Activated naive CD4-positive, alpha-beta T cell treated with anti-CD3 and anti-CD28 coated beads, Interleukin-2, amount 10 ng/mL, durations not matched to agents 7 days and 5 days (primary cell): ENCODE measurements at regions of chr6 and their contacts with region 1.

Region 1: DNA sequence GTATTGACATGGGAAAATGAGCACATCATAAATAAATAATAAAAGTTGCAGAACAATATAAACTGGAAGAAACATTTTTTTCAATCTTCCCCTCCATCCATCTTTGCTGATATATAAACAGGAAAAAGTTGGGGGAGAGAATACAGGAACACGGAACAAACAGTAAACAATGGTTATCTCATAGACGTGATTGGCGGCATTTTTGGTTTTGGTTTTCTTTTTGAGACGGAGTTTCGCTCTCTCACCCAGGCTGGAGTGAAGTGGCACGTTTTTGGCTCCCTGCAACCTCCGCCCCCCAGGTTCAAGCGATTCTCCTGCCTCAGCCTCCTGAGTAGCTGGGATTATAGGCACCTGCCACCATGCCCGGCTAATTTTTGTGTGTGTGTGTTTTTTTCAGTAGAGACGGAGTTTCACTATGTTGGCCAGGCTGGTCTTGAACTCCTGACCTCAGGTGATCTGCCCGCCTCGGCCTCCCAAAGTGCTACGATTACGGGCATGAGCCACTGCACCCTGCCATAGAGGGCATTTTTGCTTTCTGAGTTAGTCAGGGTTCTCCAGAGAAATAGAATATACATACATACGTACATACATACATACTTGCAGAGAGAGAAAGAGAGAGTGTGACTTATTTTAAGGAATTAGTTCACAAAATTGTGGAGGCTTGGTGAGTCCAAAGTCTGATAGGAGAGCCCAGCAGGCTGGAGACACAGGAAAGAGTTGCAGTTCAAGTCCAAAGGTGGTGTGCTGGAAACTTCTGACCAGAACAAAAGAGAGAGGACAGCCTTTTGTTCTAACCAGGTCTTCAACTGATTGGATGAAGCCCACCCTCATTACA is 22.6 kb downstream of the GNL1 start:
- DNase-seq: no peak
- H3K4me3 Mint-ChIP-seq: peak overlapping the region; percentile 54
- H3K27ac Mint-ChIP-seq: peak overlapping the region; percentile 90
- H3K4me1 Mint-ChIP-seq: peaks cover 44% of the 10 kb centered on the region
- H3K27me3 Mint-ChIP-seq: peaks cover 7% of the 10 kb centered on the region

Region 2: DNA sequence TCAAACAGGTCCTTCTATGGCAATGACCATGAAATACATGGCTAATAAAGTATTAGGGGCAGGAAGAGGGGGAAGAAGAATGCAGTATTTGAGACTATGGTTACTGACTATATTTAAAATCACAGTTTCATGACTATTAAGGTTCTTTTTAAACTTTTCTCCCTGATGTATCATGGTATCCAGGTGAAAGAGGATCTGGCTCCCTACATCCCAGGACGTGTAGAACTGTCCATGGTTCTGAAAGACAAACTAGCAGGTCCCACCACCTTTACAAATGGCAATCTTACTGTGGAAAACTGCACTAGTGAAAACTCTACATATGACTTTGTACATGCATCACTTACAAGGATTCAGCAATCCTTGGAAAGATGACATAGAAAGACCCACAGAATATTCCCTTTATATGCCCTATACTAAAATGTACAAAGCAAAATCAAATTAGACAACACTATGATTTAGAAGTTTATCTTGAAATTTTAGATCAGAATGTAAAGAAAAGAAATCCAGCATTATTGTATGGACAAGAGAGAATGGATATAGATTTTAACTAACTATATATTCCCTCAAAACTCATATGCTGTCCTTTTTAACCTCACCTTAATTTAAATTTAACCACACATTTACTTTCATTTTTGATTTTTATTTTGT is 155.3 kb before region 1 on chr6:
- CTCF ChIA-PET with region 1: no interaction called
- DNase-seq: no peak
- H3K4me3 Mint-ChIP-seq: no peak overlapping the region
- H3K27ac Mint-ChIP-seq: no peak overlapping the region
- H3K4me1 Mint-ChIP-seq: no peaks in the 10 kb centered on the region
- H3K27me3 Mint-ChIP-seq: peaks cover 42% of the 10 kb centered on the region

Region 3: DNA sequence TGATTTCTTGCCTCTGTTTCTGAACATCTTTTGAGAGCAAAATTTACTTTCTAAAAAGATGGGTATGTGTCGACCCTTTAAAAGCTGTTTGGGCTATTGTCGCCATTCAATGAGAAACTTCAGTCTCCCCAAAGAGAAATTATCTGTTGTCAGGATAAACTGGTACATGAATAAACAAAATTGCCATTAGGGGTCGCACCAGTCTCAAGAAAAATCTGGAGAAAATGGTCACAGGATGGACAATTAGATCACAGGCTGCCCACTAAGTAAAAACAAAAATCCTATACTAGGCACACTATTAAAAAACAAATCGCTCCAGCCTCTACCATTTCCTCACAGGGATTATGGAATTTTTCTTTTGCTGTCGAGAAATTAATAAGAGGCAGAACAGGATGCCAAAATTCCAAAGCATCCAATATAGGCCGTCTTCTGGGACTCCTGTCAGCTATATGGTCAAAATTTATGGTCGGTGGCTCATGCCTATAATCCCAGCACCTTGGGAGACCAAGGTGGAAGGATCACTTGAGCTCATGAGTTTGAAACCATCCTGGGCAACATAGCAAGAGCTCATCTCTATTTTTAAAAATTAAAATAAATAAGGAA is 49.9 kb before region 1 on chr6:
- CTCF ChIA-PET with region 1: interaction called, 251 read pairs
- DNase-seq: no peak
- H3K4me3 Mint-ChIP-seq: no peak overlapping the region
- H3K27ac Mint-ChIP-seq: no peak overlapping the region
- H3K4me1 Mint-ChIP-seq: peaks cover 51% of the 10 kb centered on the region
- H3K27me3 Mint-ChIP-seq: peaks cover 60% of the 10 kb centered on the region

Region 4: GRCh38 chr6:30489081-30490025 is 44.3 kb before region 1 on chr6 and contains the start of gene HLA-E:
- CTCF ChIA-PET with region 1: interaction called, 251 read pairs
- DNase-seq: peak; percentile 94
- H3K4me3 Mint-ChIP-seq: peak within 1 kb of the TSS; percentile 99
- H3K27ac Mint-ChIP-seq: peak within 1 kb of the TSS; percentile 100
- H3K4me1 Mint-ChIP-seq: peaks cover 49% of the 10 kb centered on the region
- H3K27me3 Mint-ChIP-seq: peaks cover 19% of the 10 kb centered on the region

Region 5: GRCh38 chr6:30500421-30501355 is 33.0 kb before region 1 on chr6:
- CTCF ChIA-PET with region 1: interaction called, 31 read pairs
- DNase-seq: no peak
- H3K4me3 Mint-ChIP-seq: peak overlapping the region; percentile 64
- H3K27ac Mint-ChIP-seq: peak overlapping the region; percentile 72
- H3K4me1 Mint-ChIP-seq: peaks cover 40% of the 10 kb centered on the region
- H3K27me3 Mint-ChIP-seq: no peaks in the 10 kb centered on the region

Region 6: DNA sequence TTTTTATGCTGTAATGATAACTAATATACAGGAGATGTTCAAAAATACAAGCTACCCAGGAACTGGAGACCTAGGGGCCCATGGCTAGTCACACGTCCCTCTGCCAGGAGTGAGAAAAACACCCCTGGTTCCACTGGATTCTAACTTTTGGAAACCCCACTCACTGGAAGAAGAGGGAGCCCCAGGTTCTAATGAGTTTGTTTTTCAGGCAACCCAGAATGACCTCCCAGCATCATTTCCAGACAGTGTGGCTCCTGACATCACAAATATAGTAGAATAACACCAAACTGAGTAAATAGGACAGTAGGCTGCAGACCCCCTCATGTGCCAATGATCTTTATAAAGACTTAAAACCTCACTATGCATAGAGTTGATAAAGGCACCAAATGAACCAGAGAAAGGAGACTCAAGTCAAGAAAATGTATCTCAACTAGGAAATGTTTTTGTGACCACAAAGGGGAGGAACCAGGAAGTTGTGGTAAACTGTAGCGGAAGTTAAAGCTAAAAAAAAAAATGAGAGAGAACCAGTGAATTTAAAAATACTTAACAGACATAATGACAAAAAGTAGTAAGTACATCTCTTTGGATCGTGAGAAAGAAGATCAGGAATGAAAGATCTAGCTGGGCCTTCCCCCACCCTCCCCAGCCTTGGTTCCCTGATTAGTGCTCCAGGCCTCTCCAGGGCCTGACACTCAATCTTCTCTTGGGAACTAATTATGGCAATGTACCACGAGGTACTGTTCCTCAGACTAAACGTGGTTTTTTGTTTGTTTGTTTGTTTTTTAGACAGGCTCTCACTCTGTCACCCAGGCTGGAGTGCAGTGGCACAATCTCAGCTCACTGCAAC is 24.6 kb before region 1 on chr6:
- CTCF ChIA-PET with region 1: interaction called, 15 read pairs
- DNase-seq: peak; percentile 41
- H3K4me3 Mint-ChIP-seq: peak overlapping the region; percentile 49
- H3K27ac Mint-ChIP-seq: peak overlapping the region; percentile 91
- H3K4me1 Mint-ChIP-seq: peaks cover 66% of the 10 kb centered on the region
- H3K27me3 Mint-ChIP-seq: no peaks in the 10 kb centered on the region

Region 7: DNA sequence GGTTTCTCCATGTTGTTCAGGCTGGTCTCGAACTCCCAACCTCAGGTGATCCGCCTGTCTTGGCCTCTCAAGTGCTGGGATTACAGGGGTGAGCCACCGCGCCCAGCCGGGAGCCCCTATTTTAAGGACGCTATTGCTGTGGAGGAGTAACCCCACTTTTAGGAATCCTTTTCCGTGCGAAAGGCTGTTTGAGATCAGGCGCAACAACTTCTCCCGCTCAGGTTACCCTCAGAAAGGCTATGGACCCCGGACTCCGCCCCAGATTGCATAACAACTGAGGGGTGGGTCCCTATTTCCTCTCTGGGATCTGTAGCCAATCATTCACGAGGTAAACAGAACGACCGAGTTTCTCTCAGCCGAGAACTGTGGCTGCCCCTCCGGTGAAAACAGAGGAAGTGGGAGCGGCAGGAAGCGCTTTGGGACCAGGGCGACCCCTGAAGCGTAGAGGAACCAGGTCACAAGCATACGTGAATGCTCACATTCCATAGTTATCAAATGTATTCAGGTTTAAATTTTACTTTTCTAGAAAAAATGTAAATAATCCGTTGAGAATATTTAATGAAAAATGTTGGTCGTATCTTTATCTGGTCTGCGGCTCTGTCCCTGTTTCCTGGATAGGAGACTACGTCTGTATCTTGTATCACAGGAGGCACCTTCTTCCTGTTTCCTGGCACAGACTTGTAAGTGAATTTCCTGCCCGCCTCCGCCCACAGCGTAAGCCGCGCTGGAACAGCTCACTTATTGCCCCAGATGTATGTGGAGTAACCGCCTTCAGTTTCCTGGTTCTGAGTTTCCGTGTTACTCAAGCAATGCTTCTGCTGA is 17.5 kb before region 1 on chr6:
- CTCF ChIA-PET with region 1: interaction called, 13 read pairs
- DNase-seq: peak; percentile 95
- H3K4me3 Mint-ChIP-seq: peak overlapping the region; percentile 78
- H3K27ac Mint-ChIP-seq: peak overlapping the region; percentile 100
- H3K4me1 Mint-ChIP-seq: peaks cover 70% of the 10 kb centered on the region
- H3K27me3 Mint-ChIP-seq: no peaks in the 10 kb centered on the region

Region 8: DNA sequence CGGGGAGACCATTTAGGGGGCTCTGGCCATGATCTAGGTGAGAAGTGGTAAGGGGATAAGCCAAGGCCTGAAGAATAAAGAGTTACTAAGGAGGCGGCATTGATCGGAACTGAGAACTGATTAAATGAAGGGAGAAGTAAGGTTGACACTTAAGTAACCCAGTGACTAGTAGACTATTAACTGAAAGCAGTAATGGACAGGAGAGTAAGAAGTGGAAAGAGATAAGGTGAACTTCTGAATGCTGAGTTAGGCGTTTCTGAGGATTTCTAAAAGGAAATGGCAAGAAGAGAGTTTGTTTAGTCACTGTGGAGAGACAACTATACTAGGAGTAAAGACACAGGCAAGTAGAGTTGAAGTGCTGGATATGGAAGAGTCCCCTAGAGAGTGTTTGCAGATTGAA is 39.4 kb after region 1 on chr6:
- CTCF ChIA-PET with region 1: no interaction called
- DNase-seq: no peak
- H3K4me3 Mint-ChIP-seq: peak overlapping the region; percentile 16
- H3K27ac Mint-ChIP-seq: peak overlapping the region; percentile 2
- H3K4me1 Mint-ChIP-seq: peaks cover 63% of the 10 kb centered on the region
- H3K27me3 Mint-ChIP-seq: peaks cover 13% of the 10 kb centered on the region

Region 9: GRCh38 chr6:30744054-30744805 is 210.6 kb after region 1 on chr6 and contains the start of gene IER3:
- CTCF ChIA-PET with region 1: no interaction called
- DNase-seq: peak; percentile 82
- H3K4me3 Mint-ChIP-seq: peak within 1 kb of the TSS; percentile 92
- H3K27ac Mint-ChIP-seq: peak within 1 kb of the TSS; percentile 95
- H3K4me1 Mint-ChIP-seq: peaks cover 70% of the 10 kb centered on the region
- H3K27me3 Mint-ChIP-seq: peaks cover 7% of the 10 kb centered on the region